ENCODE measurements at regions of chr3 and their contacts with region 1.

Region 1: GRCh38 chr3:116757315-116757714 is 47.7 kb downstream of the TUSC7 start:
- DNase-seq: no peak

Region 2: DNA sequence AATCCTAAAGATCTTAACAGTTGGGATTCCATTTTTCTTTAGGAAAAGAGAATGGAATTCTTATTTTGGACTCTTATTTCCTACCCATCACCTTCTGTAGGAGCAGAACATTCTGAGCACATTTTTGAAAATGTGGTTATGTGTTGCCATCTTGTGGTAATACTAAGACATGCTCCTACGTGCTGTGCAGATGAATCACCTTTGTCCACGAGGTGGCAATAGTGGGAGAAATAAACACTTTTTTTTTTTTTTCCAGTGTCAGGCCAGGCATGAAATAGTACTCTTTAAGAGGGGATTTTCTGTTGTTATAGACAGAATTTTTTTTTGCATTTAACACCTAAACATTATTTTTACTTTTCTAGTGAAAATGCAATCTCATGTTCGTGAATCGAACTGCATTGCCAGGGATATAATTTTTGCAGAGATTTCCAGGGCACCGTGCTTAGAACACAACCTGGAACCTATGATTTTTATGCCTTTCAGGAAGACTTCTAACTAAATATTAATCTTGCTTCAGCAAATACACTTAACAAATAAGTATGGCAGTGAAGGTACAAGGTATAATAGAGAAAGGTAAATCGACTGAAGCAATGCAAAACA is 937.4 kb before region 1 on chr3:
- intact Hi-C with region 1: loop called (anchors 2 kb)
- DNase-seq: peak in 6 of 10 donors; percentile 28 to 75 (median 34)

Region 3: GRCh38 chr3:116140100-116140689 is 617.1 kb before region 1 on chr3:
- intact Hi-C with region 1: loop called (anchors 10 kb)
- DNase-seq: no peak

Region 4: DNA sequence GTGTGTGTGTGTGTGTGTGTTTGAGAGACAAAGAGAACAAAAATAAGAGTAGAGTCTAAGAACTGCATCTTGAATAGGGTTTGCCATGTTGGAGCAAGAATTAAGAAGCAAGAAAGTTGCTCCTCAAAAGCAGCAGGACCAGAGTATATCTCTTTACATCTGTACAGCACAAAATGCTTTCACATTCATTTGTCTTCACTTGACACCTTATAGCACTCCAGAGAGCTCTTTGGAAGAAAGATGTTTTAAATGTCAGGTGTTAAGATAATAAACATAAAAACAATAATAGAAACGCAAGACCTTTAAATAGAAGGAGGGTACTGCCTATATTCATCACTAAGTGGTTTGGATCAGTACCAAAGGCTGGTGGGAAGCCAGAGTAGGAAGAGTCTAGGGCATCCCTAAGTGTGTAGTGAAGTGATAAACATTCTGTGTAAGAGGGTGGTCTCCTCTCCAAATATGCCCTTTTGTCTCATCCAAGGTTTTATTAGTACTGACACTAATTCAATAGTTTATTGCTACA is 293.0 kb before region 1 on chr3:
- intact Hi-C with region 1: loop called (anchors 10 kb)
- DNase-seq: no peak

Region 5: GRCh38 chr3:116614795-116615362 is 142.4 kb before region 1 on chr3:
- intact Hi-C with region 1: loop called (anchors 5 kb)
- DNase-seq: no peak

Region 6: DNA sequence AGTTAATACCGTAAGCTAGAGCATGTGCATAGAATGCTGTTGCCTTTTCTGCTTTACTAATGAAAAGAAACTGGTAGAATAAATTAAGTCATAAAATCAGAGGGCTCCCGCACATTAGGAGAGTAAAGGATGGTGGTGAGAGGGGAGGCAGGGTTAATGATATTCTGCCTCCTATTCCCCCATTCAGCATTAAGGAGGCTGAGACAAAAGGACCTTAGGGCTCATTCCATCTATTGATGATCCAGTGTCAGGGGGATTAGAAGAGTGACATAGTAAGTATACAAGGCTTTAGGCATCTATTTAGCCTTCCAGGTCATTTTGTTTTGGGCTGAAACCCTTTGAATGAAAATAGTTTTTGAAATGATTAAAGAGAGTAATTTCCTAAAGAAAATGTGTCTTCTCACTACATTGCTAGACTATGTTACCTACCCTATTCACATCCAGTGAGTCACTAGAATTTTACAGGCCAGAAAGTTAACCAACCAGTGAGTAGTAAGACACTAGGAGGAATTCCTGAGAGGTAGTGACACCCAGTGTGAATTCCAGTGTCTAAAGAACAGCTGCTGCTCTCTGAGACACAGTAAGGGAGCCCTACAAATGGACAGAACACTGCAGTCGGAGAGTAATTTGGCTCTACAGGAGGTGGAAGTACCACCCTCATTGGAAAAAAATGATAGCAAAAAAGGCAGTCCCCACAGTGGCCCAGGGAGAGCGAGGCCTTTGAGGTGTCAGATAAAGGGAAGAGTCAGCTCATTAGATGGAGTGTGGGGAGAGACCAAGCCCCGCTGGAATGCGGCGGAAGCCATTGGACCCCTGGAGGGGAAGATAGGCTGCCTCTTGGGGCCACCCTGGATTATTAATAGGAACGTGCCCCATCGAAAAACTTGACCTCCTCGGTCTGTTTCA is 19.8 kb after region 1 on chr3:
- intact Hi-C with region 1: no loop called
- DNase-seq: peak in 1 of 10 donors; percentile 62